PC-3 (cell line): ENCODE measurements at regions of chr7 and their contacts with region 1.

Region 1: GRCh38 chr7:42911454-42912447 is at the start of gene C7orf25:
- DNase-seq: peak; percentile 93
- ATAC-seq: peak; percentile 91
- H3K4me3 ChIP-seq: peak within 1 kb of the TSS; percentile 89
- H3K27ac ChIP-seq: peak within 1 kb of the TSS; percentile 37
- H3K4me1 ChIP-seq: peaks cover 9% of the 10 kb centered on the region
- H3K27me3 ChIP-seq: no peaks in the 10 kb centered on the region
- CTCF ChIP-seq: 0 out of 2 replicates have a peak, but pooled peaks have one; percentile 15
- total RNA-seq, gene C7orf25: 2.5 and 3.2 TPM in 2 replicates

Region 2: GRCh38 chr7:42886129-42886528 is 25.6 kb before region 1 on chr7:
- CTCF ChIA-PET with region 1: no interaction called
- POLR2A ChIA-PET with region 1: no interaction called
- intact Hi-C with region 1: loop called (anchors 2 kb)
- DNase-seq: peak; percentile 41
- ATAC-seq: no peak
- H3K4me3 ChIP-seq: no peak overlapping the region
- H3K27ac ChIP-seq: peak overlapping the region; percentile 18; the same call in 1 of the 2 replicates
- H3K4me1 ChIP-seq: peaks cover 36% of the 10 kb centered on the region
- H3K27me3 ChIP-seq: no peaks in the 10 kb centered on the region
- CTCF ChIP-seq: peak; percentile 60

Region 3: DNA sequence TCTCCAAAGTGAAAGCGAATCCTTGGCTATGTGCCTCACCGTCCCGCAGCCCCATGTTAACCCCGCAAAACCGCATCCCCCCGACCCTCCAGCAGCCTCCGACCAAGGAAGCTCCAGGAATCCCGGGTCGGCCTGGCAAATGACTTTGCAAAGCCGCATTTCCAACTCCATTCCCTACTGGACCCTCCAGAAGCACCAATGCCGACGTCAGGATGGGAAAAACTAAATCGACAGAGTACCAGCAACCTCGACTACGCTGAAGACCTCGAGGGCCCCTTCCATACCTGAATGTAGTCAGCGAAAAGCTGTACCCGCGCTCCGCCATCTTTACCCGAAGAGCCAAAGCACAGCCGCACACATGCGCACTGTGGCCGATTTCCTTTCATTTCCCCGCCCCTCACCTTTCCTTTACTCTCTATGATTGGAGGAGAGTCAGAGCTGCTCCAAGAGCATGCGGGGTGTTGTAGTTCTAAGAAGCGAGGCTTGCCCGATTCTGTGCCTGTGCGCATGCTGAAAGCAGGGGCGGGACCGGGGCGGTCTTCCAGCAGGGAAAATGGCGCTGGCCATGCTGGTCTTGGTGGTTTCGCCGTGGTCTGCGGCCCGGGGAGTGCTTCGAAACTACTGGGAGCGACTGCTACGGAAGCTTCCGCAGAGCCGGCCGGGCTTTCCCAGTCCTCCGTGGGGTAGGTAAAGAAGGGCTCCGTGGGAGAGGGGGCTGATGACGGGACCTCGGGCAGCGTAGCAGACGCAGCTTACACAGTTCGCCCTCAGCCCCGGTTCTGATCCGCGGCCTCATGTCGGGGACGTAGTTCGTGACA is 20.3 kb after region 1 on chr7 and contains the starts of genes MRPL32 and PSMA2:
- CTCF ChIA-PET with region 1: no interaction called
- POLR2A ChIA-PET with region 1: no interaction called
- intact Hi-C with region 1: loop called (anchors 2 kb)
- DNase-seq: peak; percentile 97
- ATAC-seq: peak; percentile 99
- H3K4me3 ChIP-seq: peak within 1 kb of the TSS; percentile 96
- H3K27ac ChIP-seq: peak within 1 kb of the TSS; percentile 38
- H3K4me1 ChIP-seq: peaks cover 21% of the 10 kb centered on the region
- H3K27me3 ChIP-seq: no peaks in the 10 kb centered on the region
- CTCF ChIP-seq: no peak
- total RNA-seq, gene MRPL32: 75.4 and 104 TPM in 2 replicates
- total RNA-seq, gene PSMA2: 69.7 and 85.6 TPM in 2 replicates